ENCODE measurements at regions of chr15 and their contacts with region 1.

Region 1: GRCh38 chr15:74598126-74598842 is 17.4 kb upstream of the CLK3 start:
- DNase-seq: peak; percentile 90 to 94
- ATAC-seq: peak; percentile 98 to 99 (median 99)
- H3K4me3 ChIP-seq: peak overlapping the region; percentile 70
- H3K4me3 Mint-ChIP-seq: peak overlapping the region; percentile 100
- H3K27ac ChIP-seq: peak overlapping the region; percentile 74
- H3K27ac Mint-ChIP-seq: peak overlapping the region; percentile 96 to 97
- H3K4me1 ChIP-seq: peaks cover 22% of the 10 kb centered on the region
- H3K4me1 Mint-ChIP-seq: peaks cover 16 to 18% of the 10 kb centered on the region in 2 donors
- H3K27me3 ChIP-seq: no peaks in the 10 kb centered on the region
- H3K27me3 Mint-ChIP-seq: no peaks in the 10 kb centered on the region
- CTCF ChIP-seq: no peak

Region 2: GRCh38 chr15:74565381-74566085 is 32.8 kb before region 1 on chr15:
- intact Hi-C with region 1: no loop called
- DNase-seq: no peak
- ATAC-seq: no peak
- H3K4me3 ChIP-seq: no peak overlapping the region
- H3K4me3 Mint-ChIP-seq: no peak overlapping the region
- H3K27ac ChIP-seq: no peak overlapping the region
- H3K27ac Mint-ChIP-seq: peak overlapping the region in 1 of 2 donors; percentile 3
- H3K4me1 ChIP-seq: peaks cover 9% of the 10 kb centered on the region
- H3K4me1 Mint-ChIP-seq: peaks cover 61 to 63% of the 10 kb centered on the region in 2 donors
- H3K27me3 ChIP-seq: no peaks in the 10 kb centered on the region
- H3K27me3 Mint-ChIP-seq: no peaks in the 10 kb centered on the region
- CTCF ChIP-seq: no peak

Region 3: GRCh38 chr15:74615508-74616365 is 17.5 kb after region 1 on chr15 and contains the start of gene CLK3:
- intact Hi-C with region 1: loop called (anchors 1 kb)
- DNase-seq: peak; percentile 97 to 98
- ATAC-seq: peak; percentile 76 to 88 (median 78)
- H3K4me3 ChIP-seq: peak within 1 kb of the TSS; percentile 89
- H3K4me3 Mint-ChIP-seq: peak within 1 kb of the TSS; percentile 94
- H3K27ac ChIP-seq: peak within 1 kb of the TSS; percentile 97
- H3K27ac Mint-ChIP-seq: peak within 1 kb of the TSS; percentile 94
- H3K4me1 ChIP-seq: peaks cover 46% of the 10 kb centered on the region
- H3K4me1 Mint-ChIP-seq: peaks cover 34 to 55% of the 10 kb centered on the region in 2 donors
- H3K27me3 ChIP-seq: no peaks in the 10 kb centered on the region
- H3K27me3 Mint-ChIP-seq: no peaks in the 10 kb centered on the region
- CTCF ChIP-seq: no peak
- total RNA-seq, gene CLK3: 288 to 298 (median 293) TPM

Measured in natural killer cell (primary cell).